Activated CD4-positive, alpha-beta memory T cell treated with anti-CD3 and anti-CD28 coated beads for 36 hours (primary cell): ENCODE measurements at regions of chr14 and their contacts with region 1.

Region 1: GRCh38 chr14:20343092-20343861 is at the start of gene PARP2:
- DNase-seq: peak; percentile 97
- H3K4me3 Mint-ChIP-seq: peak within 1 kb of the TSS; percentile 93
- H3K27ac Mint-ChIP-seq: peak within 1 kb of the TSS; percentile 94
- H3K4me1 Mint-ChIP-seq: peaks cover 19% of the 10 kb centered on the region
- H3K27me3 Mint-ChIP-seq: peaks cover 3% of the 10 kb centered on the region
- total RNA-seq, gene PARP2: 46.3 to 47.3 TPM

Region 2: GRCh38 chr14:20305265-20306078 is 37.8 kb before region 1 on chr14 and contains the start of gene TTC5:
- CTCF ChIA-PET with region 1: interaction called, 3 read pairs
- POLR2A ChIA-PET with region 1: no interaction called
- intact Hi-C with region 1: loop called (anchors 2 kb)
- DNase-seq: peak; percentile 93
- H3K4me3 Mint-ChIP-seq: peak within 1 kb of the TSS; percentile 89
- H3K27ac Mint-ChIP-seq: peak within 1 kb of the TSS; percentile 80
- H3K4me1 Mint-ChIP-seq: peaks cover 24% of the 10 kb centered on the region
- H3K27me3 Mint-ChIP-seq: no peaks in the 10 kb centered on the region
- total RNA-seq, gene TTC5: 19.0 to 22.7 TPM

Region 3: DNA sequence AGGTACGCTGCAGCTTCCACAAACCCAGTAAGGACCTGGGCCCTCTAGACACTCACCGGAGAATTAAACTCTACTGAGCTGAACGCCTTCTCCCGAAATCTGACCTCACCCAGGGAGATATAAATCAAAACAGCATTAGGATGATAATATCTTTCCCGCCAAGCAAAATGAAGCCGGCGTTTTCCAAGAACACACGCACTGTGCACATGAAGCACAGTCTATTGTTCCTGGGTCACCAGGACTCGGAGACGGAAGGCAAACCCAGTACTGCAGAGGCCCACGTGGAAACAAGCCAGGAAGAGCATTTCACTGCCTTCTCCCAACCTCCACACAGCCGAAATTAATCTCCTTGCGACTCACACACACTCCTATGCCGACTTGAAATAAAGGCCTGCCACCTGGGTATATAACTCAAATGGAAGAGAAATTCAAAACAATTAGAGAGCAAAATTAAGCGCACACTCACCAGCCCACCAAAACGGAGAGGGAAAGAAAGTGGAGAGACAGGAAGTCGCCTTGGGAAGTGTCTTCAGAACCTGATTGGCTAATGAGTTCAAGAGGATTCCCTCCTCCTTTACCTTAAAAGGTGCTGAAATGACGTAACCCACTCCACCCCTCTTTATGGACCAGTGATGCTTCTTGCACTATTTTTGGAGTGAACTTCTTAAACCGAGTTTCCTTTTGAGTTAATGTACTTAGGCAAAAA is 10.3 kb before region 1 on chr14 and contains the start of gene CCNB1IP1:
- CTCF ChIA-PET with region 1: interaction called, 129 read pairs
- POLR2A ChIA-PET with region 1: interaction called, 59 read pairs
- intact Hi-C with region 1: loop called (anchors 1 kb)
- DNase-seq: peak; percentile 54
- H3K4me3 Mint-ChIP-seq: peak within 1 kb of the TSS; percentile 99
- H3K27ac Mint-ChIP-seq: peak within 1 kb of the TSS; percentile 92
- H3K4me1 Mint-ChIP-seq: peaks cover 36% of the 10 kb centered on the region
- H3K27me3 Mint-ChIP-seq: no peaks in the 10 kb centered on the region
- total RNA-seq, gene CCNB1IP1: 70.2 to 77.4 TPM

Region 4: DNA sequence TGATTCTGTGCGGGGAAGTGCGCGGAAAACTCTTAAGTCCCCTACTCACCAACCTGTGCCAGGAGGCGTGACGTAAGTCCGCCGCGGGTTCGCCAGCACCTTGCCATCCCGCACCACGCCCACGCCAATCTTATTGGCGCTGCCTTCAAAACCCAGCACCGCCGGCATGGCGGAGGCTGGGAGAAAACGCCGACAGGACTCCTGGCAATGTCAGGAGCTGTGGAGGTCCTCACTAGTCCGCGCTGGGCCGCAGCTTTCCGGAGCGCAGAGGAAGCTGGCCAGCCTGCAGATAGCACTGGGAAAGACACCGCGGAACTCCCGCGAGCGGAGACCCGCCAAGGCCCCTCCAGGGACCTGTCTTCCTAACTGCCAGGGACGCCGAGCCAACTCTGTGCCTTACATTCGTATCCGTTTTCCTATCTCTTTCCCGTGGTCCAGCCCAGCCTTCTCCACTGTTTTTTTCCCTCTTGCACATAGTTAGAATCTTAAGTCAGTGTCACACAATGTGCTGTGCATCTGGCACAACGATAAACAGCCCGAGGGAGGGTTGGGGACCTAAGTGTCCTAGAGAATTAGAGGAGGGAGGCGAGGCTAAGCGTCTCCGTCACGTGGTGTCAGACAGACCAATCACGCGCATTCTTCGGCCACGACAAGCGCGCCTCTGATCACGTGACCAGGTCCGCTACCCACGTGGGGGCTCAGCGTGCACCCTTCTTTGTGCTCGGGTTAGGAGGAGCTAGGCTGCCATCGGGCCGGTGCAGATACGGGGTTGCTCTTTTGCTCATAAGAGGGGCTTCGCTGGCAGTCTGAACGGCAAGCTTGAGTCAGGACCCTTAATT is 111.5 kb after region 1 on chr14 and contains the starts of genes APEX1 and OSGEP:
- CTCF ChIA-PET with region 1: interaction called, 6 read pairs
- POLR2A ChIA-PET with region 1: interaction called, 42 read pairs
- intact Hi-C with region 1: loop called (anchors 1 kb)
- DNase-seq: peak; percentile 99
- H3K4me3 Mint-ChIP-seq: peak within 1 kb of the TSS; percentile 13
- H3K27ac Mint-ChIP-seq: no peak within 1 kb of the TSS
- H3K4me1 Mint-ChIP-seq: peaks cover 22% of the 10 kb centered on the region
- H3K27me3 Mint-ChIP-seq: no peaks in the 10 kb centered on the region
- total RNA-seq, gene APEX1: 186 to 193 TPM
- total RNA-seq, gene OSGEP: 39.2 to 41.0 TPM

Region 5: GRCh38 chr14:20469242-20469889 is 126.1 kb after region 1 on chr14 and contains the start of gene PNP:
- CTCF ChIA-PET with region 1: interaction called, 4 read pairs
- POLR2A ChIA-PET with region 1: interaction called, 27 read pairs
- intact Hi-C with region 1: loop called (anchors 1 kb)
- DNase-seq: peak; percentile 93
- H3K4me3 Mint-ChIP-seq: peak within 1 kb of the TSS; percentile 89
- H3K27ac Mint-ChIP-seq: peak within 1 kb of the TSS; percentile 99
- H3K4me1 Mint-ChIP-seq: peaks cover 39% of the 10 kb centered on the region
- H3K27me3 Mint-ChIP-seq: no peaks in the 10 kb centered on the region
- total RNA-seq, gene PNP: 178 to 179 TPM